Astrocyte of the cerebellum (primary cell): ENCODE measurements at regions of chr3 and their contacts with region 1.

Region 1: DNA sequence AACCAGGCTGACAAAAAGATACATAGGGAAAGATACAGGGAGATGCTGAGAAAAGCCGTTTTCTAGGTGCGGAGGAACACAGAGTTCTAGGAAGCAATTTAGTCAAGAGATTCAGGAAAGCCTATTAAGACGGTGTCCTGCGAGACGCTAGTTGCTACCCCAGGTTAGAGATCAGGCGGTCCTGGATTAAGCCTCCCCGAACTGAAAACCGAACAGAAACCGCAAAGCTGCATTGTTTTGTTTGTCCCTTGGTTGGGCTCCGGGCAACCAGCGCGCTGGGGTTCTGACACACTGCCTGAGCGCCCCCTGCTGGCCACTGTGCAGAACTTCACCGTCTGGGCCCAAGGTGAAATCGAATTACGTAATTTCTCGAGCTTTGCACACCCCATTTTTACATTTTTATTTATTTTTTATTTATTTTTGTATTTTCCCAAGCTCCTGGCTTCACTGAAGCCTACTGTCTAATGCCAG is 37.3 kb upstream of the NDUFB4 start:
- DNase-seq: peak; percentile 81
- H3K4me3 ChIP-seq: peak overlapping the region; percentile 41
- CTCF ChIP-seq: peak; percentile 90

Region 2: DNA sequence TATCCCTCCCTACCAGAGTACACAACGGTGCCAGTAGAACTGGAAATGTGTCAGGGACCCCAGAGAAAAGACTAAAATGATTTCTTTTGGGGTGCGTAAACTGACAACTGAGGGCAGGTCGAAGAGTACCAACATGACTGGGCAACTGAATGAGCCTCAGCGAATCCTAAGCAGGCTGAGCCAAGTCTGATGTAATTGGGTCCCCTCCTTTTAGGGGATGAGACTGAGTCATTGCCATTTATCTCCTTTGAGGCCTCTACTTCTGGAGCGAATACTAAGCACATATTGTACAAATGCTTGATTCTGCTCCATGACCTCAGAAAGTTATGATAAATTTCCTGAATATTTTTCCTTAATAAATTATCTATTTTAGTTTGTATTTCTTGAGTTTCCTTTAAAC is 256.4 kb before region 1 on chr3:
- in situ Hi-C with region 1: no loop called
- DNase-seq: no peak
- H3K4me3 ChIP-seq: no peak overlapping the region
- CTCF ChIP-seq: no peak

Region 3: GRCh38 chr3:120420928-120421551 is 137.8 kb before region 1 on chr3:
- in situ Hi-C with region 1: loop called (anchors 5 kb)
- DNase-seq: peak; percentile 66
- H3K4me3 ChIP-seq: no peak overlapping the region
- CTCF ChIP-seq: peak; percentile 44

Region 4: DNA sequence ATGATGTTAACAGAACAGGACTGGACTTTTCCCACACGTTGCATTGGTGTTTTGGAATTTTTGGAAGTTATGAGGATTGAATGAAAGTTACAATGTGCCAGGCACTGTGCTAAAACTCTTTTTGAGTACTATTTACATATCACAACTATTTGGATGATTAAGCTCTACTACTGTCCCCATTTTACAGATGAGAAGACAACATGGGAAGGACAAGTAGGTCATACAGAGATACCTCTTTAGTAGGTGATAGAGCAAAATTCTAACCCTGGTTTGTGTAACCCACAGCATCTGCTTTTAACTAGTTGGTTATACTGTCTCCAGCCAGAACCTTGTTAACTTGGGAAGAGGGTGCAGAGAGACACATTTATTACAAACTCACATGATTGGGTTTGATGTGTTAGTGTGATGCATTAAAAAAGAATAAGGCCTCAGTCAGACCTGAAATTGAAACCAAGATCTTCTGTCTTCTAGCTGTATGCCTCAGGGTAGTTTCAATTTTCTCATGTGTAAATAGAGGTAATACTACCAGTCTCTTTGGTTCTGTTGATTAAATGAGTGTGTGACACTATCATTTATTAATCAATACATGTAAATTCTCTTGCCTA is 38.7 kb after region 1 on chr3:
- in situ Hi-C with region 1: no loop called
- DNase-seq: no peak
- H3K4me3 ChIP-seq: peak overlapping the region; percentile 82
- CTCF ChIP-seq: no peak

Region 5: GRCh38 chr3:120780977-120781376 is 222.2 kb after region 1 on chr3:
- in situ Hi-C with region 1: no loop called
- DNase-seq: peak; percentile 63
- H3K4me3 ChIP-seq: no peak overlapping the region
- CTCF ChIP-seq: no peak